H1 (cell line): ENCODE measurements at regions of chr1 and their contacts with region 1.

Region 1: DNA sequence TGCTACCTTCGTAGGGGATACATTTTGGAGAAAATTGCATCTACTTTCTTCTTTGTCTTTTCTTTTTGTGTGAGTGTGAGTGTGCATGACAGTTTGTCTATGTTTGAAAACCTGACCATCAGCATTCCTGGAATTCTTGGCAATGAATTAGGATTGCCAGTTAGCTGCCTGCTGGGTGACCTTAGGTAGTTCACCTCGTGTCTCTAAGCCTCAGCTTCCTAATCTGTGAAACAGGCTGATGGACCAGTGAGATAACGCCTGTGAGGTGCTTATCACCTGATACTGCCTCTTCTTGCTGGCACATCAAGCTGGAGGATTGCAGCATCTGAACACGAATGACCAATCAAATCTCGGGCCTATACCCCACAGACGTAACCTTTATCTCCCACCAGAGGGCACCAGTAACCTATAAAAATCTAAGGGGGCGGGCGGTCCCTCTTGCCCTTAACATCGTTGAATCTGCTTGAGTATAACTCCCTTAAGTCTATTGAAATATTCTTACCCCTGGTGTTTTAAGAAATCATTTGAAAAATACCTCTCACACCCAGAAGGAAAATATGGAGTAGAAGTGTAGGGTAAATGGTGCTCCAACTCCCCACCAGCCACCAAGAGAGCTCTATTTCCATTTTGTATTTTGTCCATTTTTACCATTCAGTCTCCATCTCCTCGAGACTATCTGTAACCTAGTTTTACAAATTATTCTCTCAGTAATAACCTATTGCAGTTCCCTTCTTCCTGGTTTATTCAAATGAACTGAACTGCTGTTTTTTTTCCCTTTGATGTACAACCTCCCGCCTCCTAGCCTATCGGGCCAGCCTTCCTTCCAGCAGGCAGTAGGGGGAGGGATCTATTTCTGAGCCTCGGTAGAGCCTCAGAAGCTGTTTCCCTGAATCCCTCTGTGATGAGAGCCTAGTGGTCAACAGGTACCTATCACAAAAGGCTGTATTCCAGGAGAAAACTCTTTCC is 49.7 kb downstream of the MDM4 start:
- DNase-seq: peak in 1 of 2 experiments; percentile 63
- H3K4me3 ChIP-seq: peak overlapping the region in 1 of 4 experiments; percentile 34; a peak in 2 of 8 replicates
- H3K27ac ChIP-seq: peak overlapping the region; percentile 4; the same call in 1 of the 2 replicates
- H3K4me1 ChIP-seq: peaks cover 3 to 24% (median 13%) of the 10 kb centered on the region in 4 experiments; a peak in 6 of 7 replicates
- H3K27me3 ChIP-seq: no peaks in the 10 kb centered on the region; a peak in 1 of 7 replicates
- CTCF ChIP-seq: peak; percentile 36 to 83 (median 73)
- EP300 ChIP-seq: peak in 1 of 2 experiments; percentile 85; a peak in 1 of 3 replicates
- POLR2A ChIP-seq: no peak
- RAD21 ChIP-seq: peak; percentile 84 to 89

Region 2: DNA sequence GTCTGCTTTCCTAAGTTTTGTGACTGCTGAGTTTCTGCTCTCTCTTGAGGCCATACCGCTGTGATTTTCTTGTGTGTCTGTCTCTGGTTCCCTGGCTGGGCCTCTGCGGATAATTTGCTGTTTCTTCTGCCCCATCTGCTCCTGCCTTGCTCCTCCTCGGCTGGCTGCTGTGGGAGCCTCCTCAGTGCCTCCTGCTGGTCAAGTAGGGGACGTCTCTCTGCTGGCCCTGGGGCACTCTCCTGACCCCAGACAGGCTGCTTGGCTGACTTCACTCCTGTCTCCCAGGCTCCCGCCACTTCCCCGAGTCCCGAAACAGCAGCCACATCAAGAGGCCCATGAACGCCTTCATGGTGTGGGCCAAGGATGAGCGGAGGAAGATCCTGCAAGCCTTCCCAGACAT is 442.5 kb before region 1 on chr1:
- CTCF ChIA-PET with region 1: no interaction called
- POLR2A ChIA-PET with region 1: no interaction called
- DNase-seq: peak in 1 of 2 experiments; percentile 85
- H3K4me3 ChIP-seq: no peak overlapping the region
- H3K27ac ChIP-seq: no peak overlapping the region
- H3K4me1 ChIP-seq: peaks cover 0 to 16% (median 2%) of the 10 kb centered on the region in 4 experiments; a peak in 5 of 7 replicates
- H3K27me3 ChIP-seq: no peaks in the 10 kb centered on the region; a peak in 1 of 7 replicates
- CTCF ChIP-seq: peak in 2 of 3 experiments; percentile 84 to 87; a peak in 3 of 4 replicates
- EP300 ChIP-seq: no peak
- POLR2A ChIP-seq: no peak
- RAD21 ChIP-seq: peak; percentile 81 to 87

Region 3: DNA sequence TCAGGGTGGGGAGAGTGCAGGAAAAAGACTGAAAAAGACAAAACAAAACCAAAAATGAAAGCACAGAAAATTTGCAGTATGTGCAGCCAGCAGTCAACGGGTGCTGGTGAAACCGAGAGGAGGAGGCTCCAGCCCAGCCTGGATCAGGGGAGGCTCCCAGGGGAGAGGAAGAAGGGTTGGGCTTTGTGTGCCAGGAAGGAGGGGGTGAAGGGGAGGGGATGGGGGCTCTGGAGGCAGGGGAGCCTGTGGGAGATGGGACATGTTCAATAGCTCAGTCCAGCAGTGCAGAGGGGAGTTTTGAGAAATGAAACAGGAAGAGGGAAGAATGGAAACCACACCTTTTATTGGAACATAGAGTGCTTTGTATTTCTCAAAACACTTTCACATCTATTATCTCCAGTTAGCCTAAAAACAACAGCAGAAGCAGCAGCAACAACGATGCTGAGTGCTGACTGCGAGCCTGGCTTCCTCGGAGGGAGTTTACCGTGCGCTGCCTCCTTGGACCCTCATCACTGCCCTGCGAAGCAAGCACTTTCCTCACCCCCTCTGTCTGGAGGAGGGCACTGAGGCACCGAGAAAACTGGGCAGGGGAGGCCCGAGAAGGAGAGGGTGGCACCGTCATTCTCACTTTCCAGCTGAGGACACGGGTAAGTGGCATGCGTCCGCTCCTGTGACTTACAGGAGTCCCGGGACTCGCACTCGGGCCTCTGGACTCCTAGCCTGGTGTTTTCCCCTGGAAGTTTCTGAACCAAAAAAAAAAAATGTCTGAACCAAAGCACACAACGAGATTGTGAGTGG is 13.2 kb after region 1 on chr1:
- CTCF ChIA-PET with region 1: interaction called, 73 read pairs
- POLR2A ChIA-PET with region 1: interaction called, 5 read pairs
- DNase-seq: no peak
- H3K4me3 ChIP-seq: peak overlapping the region in 1 of 4 experiments; percentile 3; a peak in 2 of 8 replicates
- H3K27ac ChIP-seq: no peak overlapping the region
- H3K4me1 ChIP-seq: peaks cover 18 to 40% (median 27%) of the 10 kb centered on the region in 4 experiments
- H3K27me3 ChIP-seq: peaks cover 0 to 12% (median 4%) of the 10 kb centered on the region in 4 experiments; a peak in 3 of 7 replicates
- CTCF ChIP-seq: no peak
- EP300 ChIP-seq: no peak
- POLR2A ChIP-seq: no peak
- RAD21 ChIP-seq: no peak

Region 4: GRCh38 chr1:204607910-204608309 is 42.0 kb after region 1 on chr1:
- CTCF ChIA-PET with region 1: interaction called, 10 read pairs
- POLR2A ChIA-PET with region 1: interaction called, 4 read pairs
- DNase-seq: no peak
- H3K4me3 ChIP-seq: no peak overlapping the region
- H3K27ac ChIP-seq: no peak overlapping the region
- H3K4me1 ChIP-seq: peaks cover 0 to 3% (median under 1%) of the 10 kb centered on the region in 4 experiments; a peak in 2 of 7 replicates
- H3K27me3 ChIP-seq: no peaks in the 10 kb centered on the region
- CTCF ChIP-seq: no peak
- EP300 ChIP-seq: no peak
- POLR2A ChIP-seq: no peak
- RAD21 ChIP-seq: no peak

Region 5: DNA sequence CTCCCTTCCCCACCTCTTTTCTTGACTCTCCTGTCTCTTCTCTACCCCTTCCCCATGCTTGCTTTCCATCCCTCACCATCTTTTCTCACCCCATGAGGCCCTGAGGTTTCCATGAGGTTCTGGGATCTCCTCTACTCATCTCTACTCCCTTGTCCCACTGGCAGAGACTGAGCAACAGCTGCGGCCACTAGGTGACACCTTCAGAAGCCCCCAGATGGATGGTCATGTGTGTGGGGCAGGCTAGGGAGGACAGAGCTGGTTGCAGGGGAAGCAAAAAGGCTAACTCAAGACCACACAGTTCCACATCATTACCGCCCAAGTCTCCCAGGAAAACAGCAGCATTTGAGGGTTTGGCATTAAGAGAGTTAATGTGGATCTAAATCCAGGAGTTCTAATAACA is 74.7 kb after region 1 on chr1:
- CTCF ChIA-PET with region 1: interaction called, 14 read pairs
- POLR2A ChIA-PET with region 1: no interaction called
- DNase-seq: no peak
- H3K4me3 ChIP-seq: no peak overlapping the region
- H3K27ac ChIP-seq: no peak overlapping the region
- H3K4me1 ChIP-seq: no peaks in the 10 kb centered on the region
- H3K27me3 ChIP-seq: no peaks in the 10 kb centered on the region
- CTCF ChIP-seq: 0 out of 4 replicates have a peak, but pooled peaks of 1 of the 3 experiments have one; percentile 16
- EP300 ChIP-seq: no peak
- POLR2A ChIP-seq: no peak
- RAD21 ChIP-seq: no peak; a peak in 1 of 4 replicates

Region 6: GRCh38 chr1:204692325-204692840 is 126.5 kb after region 1 on chr1:
- CTCF ChIA-PET with region 1: interaction called, 17 read pairs
- POLR2A ChIA-PET with region 1: no interaction called
- DNase-seq: peak in 1 of 2 experiments; percentile 53
- H3K4me3 ChIP-seq: peak overlapping the region in 1 of 4 experiments; percentile 12; a peak in 1 of 8 replicates
- H3K27ac ChIP-seq: no peak overlapping the region
- H3K4me1 ChIP-seq: peaks cover 1 to 4% (median 2%) of the 10 kb centered on the region in 4 experiments; a peak in 5 of 7 replicates
- H3K27me3 ChIP-seq: peaks cover 0 to 5% (median 5%) of the 10 kb centered on the region in 4 experiments; a peak in 3 of 7 replicates
- CTCF ChIP-seq: peak; percentile 5 to 30 (median 23)
- EP300 ChIP-seq: no peak
- POLR2A ChIP-seq: no peak
- RAD21 ChIP-seq: peak; percentile 41 to 54; a peak in 3 of 4 replicates

Region 7: DNA sequence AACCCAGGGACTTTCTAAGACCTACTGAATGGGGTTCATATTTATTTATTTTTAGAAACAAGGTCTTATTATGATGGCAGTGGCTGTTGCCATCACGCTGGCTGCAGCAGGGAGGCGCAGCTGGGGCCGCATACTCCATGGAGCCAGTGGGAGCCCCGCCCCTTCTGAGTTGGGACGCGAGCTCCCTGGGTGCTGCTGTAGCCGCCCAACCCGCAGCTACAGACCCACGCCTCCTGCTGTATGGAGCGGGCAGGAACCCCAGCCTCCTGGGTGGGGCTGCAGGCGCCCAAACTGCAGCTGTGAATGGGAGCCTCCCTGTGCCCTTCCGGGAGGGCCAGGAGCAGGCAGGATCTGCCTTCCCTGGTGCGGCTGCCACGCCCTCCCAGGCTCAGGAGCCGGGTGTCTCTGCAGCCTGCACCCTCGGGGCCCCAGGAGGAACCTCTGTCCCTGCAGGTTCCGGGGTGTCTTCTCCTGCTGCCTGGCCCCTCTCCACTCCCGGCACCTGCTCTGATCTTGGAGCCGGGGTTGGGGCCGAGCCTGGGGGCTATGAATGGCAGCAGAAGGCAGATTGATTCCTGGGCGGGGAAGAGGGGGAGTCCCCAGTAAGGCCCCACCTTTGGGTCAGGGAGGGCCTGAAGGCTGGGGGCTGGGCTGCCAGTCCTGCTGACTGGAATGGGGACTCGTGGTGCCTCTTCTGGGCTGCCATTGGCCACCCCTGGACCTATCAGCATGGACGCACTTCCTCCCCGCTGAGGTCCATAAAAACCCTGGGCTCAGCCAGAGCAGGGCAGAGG is 186.2 kb after region 1 on chr1:
- CTCF ChIA-PET with region 1: interaction called, 15 read pairs
- POLR2A ChIA-PET with region 1: no interaction called
- DNase-seq: peak; percentile 31 to 65
- H3K4me3 ChIP-seq: no peak overlapping the region
- H3K27ac ChIP-seq: no peak overlapping the region
- H3K4me1 ChIP-seq: peaks cover 0 to 7% (median 5%) of the 10 kb centered on the region in 4 experiments; a peak in 5 of 7 replicates
- H3K27me3 ChIP-seq: no peaks in the 10 kb centered on the region
- CTCF ChIP-seq: no peak; a peak in 1 of 4 replicates
- EP300 ChIP-seq: no peak
- POLR2A ChIP-seq: no peak
- RAD21 ChIP-seq: peak in 1 of 2 experiments; percentile 26; a peak in 1 of 4 replicates

Region 8: DNA sequence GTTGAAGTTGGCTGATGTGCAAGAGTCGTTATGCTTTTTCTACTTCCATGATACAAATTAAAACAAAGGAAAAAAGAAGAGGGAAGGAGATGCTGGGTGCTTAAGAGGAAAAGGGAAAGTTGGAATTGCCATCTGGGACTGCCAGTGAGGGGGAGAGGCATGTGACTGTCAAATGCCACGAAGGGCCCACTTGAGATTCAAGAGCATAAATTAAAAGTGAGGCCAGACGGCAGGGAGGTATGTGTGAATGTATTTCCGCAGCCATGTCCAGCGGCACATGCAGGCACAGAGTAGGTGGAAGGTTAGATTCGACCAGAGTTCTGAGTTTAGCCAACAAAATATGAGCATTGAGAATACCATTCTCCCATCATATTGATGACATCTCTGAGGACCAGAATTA is 336.8 kb after region 1 on chr1:
- CTCF ChIA-PET with region 1: no interaction called
- POLR2A ChIA-PET with region 1: no interaction called
- DNase-seq: no peak
- H3K4me3 ChIP-seq: no peak overlapping the region
- H3K27ac ChIP-seq: no peak overlapping the region
- H3K4me1 ChIP-seq: no peaks in the 10 kb centered on the region
- H3K27me3 ChIP-seq: no peaks in the 10 kb centered on the region
- CTCF ChIP-seq: no peak
- EP300 ChIP-seq: no peak
- POLR2A ChIP-seq: no peak
- RAD21 ChIP-seq: no peak